Cardiac septum (tissue), 1 donor: ENCODE measurements at regions of chr13 and their contacts with region 1.

Region 1: GRCh38 chr13:41456768-41457588 is at the start of gene RGCC:
- DNase-seq: peak; percentile 93
- total RNA-seq, gene RGCC: 41.4 TPM

Region 2: DNA sequence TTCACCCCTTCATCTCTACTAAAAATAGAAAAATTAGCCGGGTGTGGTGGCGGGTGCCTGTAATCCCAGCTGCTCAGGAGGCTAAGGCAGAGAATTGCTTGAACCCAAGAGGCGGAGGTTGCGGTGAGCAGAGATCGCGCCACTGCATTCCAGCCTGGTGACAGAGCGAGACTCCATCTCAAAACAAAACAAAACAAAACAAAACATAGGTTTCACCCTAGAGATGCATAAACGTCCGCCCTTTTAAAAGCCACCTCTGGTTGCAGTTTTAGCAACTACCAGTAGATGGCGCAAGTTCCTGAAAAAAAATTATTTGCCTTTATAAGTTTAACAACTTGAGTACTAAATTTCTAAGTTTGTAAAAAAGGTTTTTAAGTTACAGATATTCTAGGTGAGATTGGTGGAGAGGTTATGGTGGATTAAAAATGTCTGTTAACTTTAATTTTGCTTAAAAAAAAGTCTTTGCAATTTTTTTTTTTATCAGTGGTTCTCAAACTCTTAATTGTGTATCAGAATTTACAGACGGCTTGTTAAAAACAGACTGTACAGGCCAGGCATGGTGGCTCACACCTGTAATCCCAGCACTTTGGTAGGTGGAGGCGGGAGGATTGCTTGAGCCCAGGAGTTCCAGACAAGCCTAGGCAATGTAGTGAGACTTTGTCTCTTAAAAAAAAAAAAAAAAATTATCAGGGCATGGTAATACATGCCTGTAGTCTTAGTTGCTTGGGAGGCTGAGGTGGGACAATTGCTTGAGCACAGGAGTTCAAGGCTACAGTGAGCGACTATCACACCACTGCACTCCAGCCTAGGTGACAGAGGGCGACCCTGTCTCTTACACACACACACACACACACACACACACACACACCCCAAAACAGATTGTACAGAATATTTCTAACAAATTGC is 103.8 kb before region 1 on chr13:
- intact Hi-C with region 1: loop called (anchors 5 kb)
- DNase-seq: no peak